ENCODE measurements at regions of chr3 and their contacts with region 1.

Region 1: DNA sequence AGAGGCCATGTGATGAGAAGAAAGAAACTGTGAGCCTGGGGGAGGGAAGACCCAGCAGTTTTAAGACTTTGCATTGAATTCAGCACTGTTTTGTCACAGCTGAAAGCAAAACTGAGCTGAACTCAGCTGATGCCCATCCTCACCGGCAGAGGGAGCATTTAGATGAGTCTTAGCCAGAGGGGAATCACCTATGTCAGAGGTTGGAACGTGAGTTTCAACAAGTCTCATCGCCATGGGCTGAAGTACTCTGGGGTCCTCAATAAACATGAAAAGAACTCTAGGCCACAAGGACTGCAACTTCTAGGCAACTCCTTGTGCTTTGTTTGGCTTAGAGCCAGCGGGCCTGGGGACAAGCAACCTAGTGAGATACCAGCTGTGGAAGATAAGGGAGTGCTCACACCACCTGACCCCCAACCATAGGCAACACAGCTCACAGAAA is 324.5 kb downstream of the TBL1XR1 start:
- DNase-seq: peak; percentile 72
- H3K4me3 Mint-ChIP-seq: no peak overlapping the region
- H3K27ac Mint-ChIP-seq: no peak overlapping the region
- H3K4me1 Mint-ChIP-seq: peaks cover 3% of the 10 kb centered on the region
- H3K27me3 Mint-ChIP-seq: peaks cover 3% of the 10 kb centered on the region

Region 2: DNA sequence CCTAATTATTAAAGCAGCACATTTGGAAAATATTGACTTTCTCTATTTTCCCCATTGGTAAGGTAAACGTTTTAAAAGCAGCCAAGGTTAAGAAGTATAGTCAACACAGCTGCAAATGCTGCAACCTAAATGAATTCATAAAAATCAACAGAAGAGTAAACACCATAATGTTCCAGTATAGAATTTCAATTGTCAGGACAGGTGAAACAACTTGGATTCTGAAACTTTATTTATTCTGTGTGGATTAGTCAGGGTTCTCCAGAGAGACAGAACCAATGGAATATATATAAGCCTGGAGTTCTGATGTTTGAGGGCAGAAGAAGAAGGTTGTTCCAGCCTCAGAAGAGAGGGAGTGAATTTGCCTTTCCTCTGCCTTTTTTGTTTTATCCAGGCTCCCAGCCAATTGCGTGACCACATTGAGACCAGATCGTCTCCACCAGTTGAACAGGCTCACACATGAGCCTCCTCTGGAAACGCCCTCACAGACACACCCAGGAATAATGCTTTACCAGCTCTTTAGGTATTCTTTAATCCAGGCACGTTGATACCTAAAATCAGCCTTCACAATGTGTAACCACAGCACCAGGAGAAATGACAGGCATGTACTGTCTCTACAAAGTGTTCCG is 598.7 kb before region 1 on chr3:
- CTCF ChIA-PET with region 1: no interaction called
- POLR2A ChIA-PET with region 1: no interaction called
- intact Hi-C with region 1: no loop called
- DNase-seq: no peak
- H3K4me3 Mint-ChIP-seq: no peak overlapping the region
- H3K27ac Mint-ChIP-seq: no peak overlapping the region
- H3K4me1 Mint-ChIP-seq: no peaks in the 10 kb centered on the region
- H3K27me3 Mint-ChIP-seq: no peaks in the 10 kb centered on the region

Region 3: GRCh38 chr3:176896640-176897039 is 23.9 kb after region 1 on chr3:
- CTCF ChIA-PET with region 1: no interaction called
- POLR2A ChIA-PET with region 1: no interaction called
- intact Hi-C with region 1: no loop called
- DNase-seq: no peak
- H3K4me3 Mint-ChIP-seq: no peak overlapping the region
- H3K27ac Mint-ChIP-seq: no peak overlapping the region
- H3K4me1 Mint-ChIP-seq: no peaks in the 10 kb centered on the region
- H3K27me3 Mint-ChIP-seq: peaks cover 27% of the 10 kb centered on the region

Region 4: GRCh38 chr3:176916777-176917176 is 44.0 kb after region 1 on chr3:
- CTCF ChIA-PET with region 1: no interaction called
- POLR2A ChIA-PET with region 1: no interaction called
- intact Hi-C with region 1: no loop called
- DNase-seq: no peak
- H3K4me3 Mint-ChIP-seq: no peak overlapping the region
- H3K27ac Mint-ChIP-seq: no peak overlapping the region
- H3K4me1 Mint-ChIP-seq: no peaks in the 10 kb centered on the region
- H3K27me3 Mint-ChIP-seq: peaks cover 2% of the 10 kb centered on the region

Region 5: GRCh38 chr3:176927706-176928581 is 55.2 kb after region 1 on chr3:
- CTCF ChIA-PET with region 1: interaction called, 16 read pairs
- POLR2A ChIA-PET with region 1: no interaction called
- intact Hi-C with region 1: no loop called
- DNase-seq: no peak
- H3K4me3 Mint-ChIP-seq: no peak overlapping the region
- H3K27ac Mint-ChIP-seq: no peak overlapping the region
- H3K4me1 Mint-ChIP-seq: peaks cover 2% of the 10 kb centered on the region
- H3K27me3 Mint-ChIP-seq: peaks cover 16% of the 10 kb centered on the region

Region 6: GRCh38 chr3:176939022-176939817 is 66.4 kb after region 1 on chr3:
- CTCF ChIA-PET with region 1: interaction called, 48 read pairs
- POLR2A ChIA-PET with region 1: no interaction called
- intact Hi-C with region 1: loop called (anchors 1 kb)
- DNase-seq: peak; percentile 26
- H3K4me3 Mint-ChIP-seq: no peak overlapping the region
- H3K27ac Mint-ChIP-seq: no peak overlapping the region
- H3K4me1 Mint-ChIP-seq: no peaks in the 10 kb centered on the region
- H3K27me3 Mint-ChIP-seq: peaks cover 6% of the 10 kb centered on the region

Region 7: GRCh38 chr3:177124882-177125281 is 252.1 kb after region 1 on chr3:
- CTCF ChIA-PET with region 1: no interaction called
- POLR2A ChIA-PET with region 1: no interaction called
- intact Hi-C with region 1: no loop called
- DNase-seq: no peak
- H3K4me3 Mint-ChIP-seq: no peak overlapping the region
- H3K27ac Mint-ChIP-seq: no peak overlapping the region
- H3K4me1 Mint-ChIP-seq: peaks cover 75% of the 10 kb centered on the region
- H3K27me3 Mint-ChIP-seq: no peaks in the 10 kb centered on the region

Region 8: GRCh38 chr3:177777699-177778098 is 904.9 kb after region 1 on chr3:
- CTCF ChIA-PET with region 1: no interaction called
- POLR2A ChIA-PET with region 1: no interaction called
- intact Hi-C with region 1: loop called (anchors 5 kb)
- DNase-seq: peak; percentile 61
- H3K4me3 Mint-ChIP-seq: no peak overlapping the region
- H3K27ac Mint-ChIP-seq: no peak overlapping the region
- H3K4me1 Mint-ChIP-seq: peaks cover 16% of the 10 kb centered on the region
- H3K27me3 Mint-ChIP-seq: no peaks in the 10 kb centered on the region

Region 9: DNA sequence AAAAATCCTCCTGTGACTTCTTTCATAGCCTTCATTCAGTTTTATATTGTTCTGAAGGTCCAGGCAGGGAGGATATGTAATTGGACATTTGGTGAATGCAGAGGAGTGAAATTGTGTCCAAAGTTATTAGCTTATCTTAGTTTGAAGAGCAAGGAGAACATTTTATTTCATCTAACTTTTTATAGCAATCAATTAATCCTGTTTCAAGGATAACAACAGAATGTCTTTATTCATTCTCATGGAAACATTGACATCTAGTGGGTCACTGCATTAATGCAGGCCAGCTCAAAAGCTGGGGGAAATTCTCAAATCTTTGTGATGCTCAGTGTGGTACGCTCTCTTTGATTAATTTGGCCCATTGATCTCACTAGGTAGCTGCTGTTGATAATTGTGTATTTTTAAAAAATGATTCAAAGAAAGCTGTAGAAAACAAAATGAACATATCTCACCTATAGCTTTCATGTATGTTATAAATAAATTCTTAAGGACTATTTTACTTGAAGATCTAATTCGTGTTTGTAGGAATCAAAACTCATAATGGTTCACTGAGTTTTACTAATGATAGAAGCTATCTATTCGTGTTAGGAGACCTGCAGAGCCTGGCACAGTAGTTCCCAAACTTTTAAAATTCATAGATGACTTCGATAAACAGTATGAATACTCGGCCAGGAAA is 1512.6 kb after region 1 on chr3:
- CTCF ChIA-PET with region 1: interaction called, 15 read pairs
- POLR2A ChIA-PET with region 1: no interaction called
- intact Hi-C with region 1: loop called (anchors 5 kb)
- DNase-seq: peak; percentile 20
- H3K4me3 Mint-ChIP-seq: no peak overlapping the region
- H3K27ac Mint-ChIP-seq: no peak overlapping the region
- H3K4me1 Mint-ChIP-seq: no peaks in the 10 kb centered on the region
- H3K27me3 Mint-ChIP-seq: peaks cover 15% of the 10 kb centered on the region